Lower leg skin (tissue), 4 donors: ENCODE measurements at regions of chr17 and their contacts with region 1.

Region 1: GRCh38 chr17:62732125-62732524 is 76.0 kb downstream of the MARCHF10 start:
- DNase-seq: no peak
- H3K4me3 ChIP-seq: no peak overlapping the region
- CTCF ChIP-seq: no peak
- POLR2A ChIP-seq: no peak

Region 2: GRCh38 chr17:63549946-63550807 is 818.1 kb after region 1 on chr17 and contains the start of gene DCAF7:
- intact Hi-C with region 1: loop called (anchors 5 kb)
- DNase-seq: peak; percentile 99 to 100
- H3K4me3 ChIP-seq: peak within 1 kb of the TSS; percentile 95
- CTCF ChIP-seq: peak in 1 of 3 donors; percentile 20
- POLR2A ChIP-seq: peak in 1 of 2 donors; percentile 18
- total RNA-seq, gene DCAF7: 23.8 to 33.0 (median 25.4) TPM